ENCODE measurements at regions of chr12 and their contacts with region 1.

Region 1: GRCh38 chr12:25236190-25236589 is 14.5 kb downstream of the KRAS start:
- DNase-seq: no peak
- ATAC-seq: no peak
- H3K4me3 Mint-ChIP-seq: no peak overlapping the region
- H3K27ac Mint-ChIP-seq: peak overlapping the region; percentile 34
- H3K4me1 Mint-ChIP-seq: peaks cover 31% of the 10 kb centered on the region
- H3K27me3 Mint-ChIP-seq: no peaks in the 10 kb centered on the region
- CTCF ChIP-seq: no peak

Region 2: GRCh38 chr12:25119020-25119419 is 117.2 kb before region 1 on chr12:
- CTCF ChIA-PET with region 1: no interaction called
- POLR2A ChIA-PET with region 1: no interaction called
- intact Hi-C with region 1: no loop called
- DNase-seq: no peak
- ATAC-seq: no peak
- H3K4me3 Mint-ChIP-seq: no peak overlapping the region
- H3K27ac Mint-ChIP-seq: no peak overlapping the region
- H3K4me1 Mint-ChIP-seq: peaks cover 4% of the 10 kb centered on the region
- H3K27me3 Mint-ChIP-seq: no peaks in the 10 kb centered on the region
- CTCF ChIP-seq: no peak

Region 3: DNA sequence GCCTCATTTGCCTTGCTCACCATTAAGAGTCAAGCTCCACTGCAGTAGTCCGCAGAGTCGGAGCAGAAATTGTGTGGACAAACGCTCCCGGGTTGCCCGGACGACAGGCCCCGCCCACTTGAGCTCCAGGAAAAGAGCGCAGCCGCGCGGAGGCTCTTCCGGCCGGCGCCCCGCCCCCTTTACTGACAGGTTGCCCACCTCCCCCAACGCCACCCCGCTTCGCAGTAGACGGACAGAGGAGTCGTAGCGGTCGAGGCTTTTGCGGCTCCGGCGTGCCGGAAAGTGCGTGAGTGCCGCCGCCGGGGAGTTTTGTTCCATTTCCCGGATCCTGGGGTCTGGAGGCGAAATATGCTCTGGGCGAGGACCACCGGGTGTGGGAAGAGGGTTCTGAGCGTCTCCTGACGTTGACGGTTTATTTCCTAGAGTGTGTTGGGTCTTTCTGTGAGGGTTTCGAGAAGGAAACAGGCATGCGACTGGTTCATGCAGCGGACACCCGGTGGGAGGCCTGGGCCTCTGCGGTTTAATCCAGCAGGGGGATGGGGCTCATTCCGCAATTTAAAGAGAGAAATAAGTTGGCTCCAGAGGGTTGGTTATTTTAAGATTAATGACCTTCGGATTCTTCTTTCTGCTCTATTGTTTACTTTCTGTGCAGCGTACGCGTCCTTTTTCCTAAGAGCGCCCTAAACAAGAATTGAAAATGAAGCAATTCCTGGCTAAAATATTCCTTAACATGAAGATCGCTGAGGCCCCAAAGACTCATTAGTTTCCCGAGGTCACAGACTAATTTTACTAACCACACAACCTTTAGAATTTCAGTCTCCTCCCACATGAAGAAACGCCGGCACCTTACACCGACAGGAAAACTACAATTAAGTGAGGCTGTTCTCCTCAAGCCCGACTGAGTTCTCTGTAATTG is 40.9 kb before region 1 on chr12 and contains the starts of genes DNAI7 and ETFRF1:
- CTCF ChIA-PET with region 1: interaction called, 8 read pairs
- POLR2A ChIA-PET with region 1: no interaction called
- intact Hi-C with region 1: loop called (anchors 5 kb)
- DNase-seq: peak; percentile 98
- ATAC-seq: peak; percentile 100
- H3K4me3 Mint-ChIP-seq: peak within 1 kb of the TSS; percentile 92
- H3K27ac Mint-ChIP-seq: peak within 1 kb of the TSS; percentile 95
- H3K4me1 Mint-ChIP-seq: peaks cover 16% of the 10 kb centered on the region
- H3K27me3 Mint-ChIP-seq: no peaks in the 10 kb centered on the region
- CTCF ChIP-seq: no peak
- total RNA-seq, gene DNAI7: not detected
- total RNA-seq, gene ETFRF1: 10.1 to 11.0 TPM